Activated CD8-positive, alpha-beta T cell treated with anti-CD3 and anti-CD28 coated beads, Interleukin-2, amount 10 ng/mL, durations not matched to agents 7 days and 5 days (primary cell): ENCODE measurements at regions of chr11 and their contacts with region 1.

Region 1: DNA sequence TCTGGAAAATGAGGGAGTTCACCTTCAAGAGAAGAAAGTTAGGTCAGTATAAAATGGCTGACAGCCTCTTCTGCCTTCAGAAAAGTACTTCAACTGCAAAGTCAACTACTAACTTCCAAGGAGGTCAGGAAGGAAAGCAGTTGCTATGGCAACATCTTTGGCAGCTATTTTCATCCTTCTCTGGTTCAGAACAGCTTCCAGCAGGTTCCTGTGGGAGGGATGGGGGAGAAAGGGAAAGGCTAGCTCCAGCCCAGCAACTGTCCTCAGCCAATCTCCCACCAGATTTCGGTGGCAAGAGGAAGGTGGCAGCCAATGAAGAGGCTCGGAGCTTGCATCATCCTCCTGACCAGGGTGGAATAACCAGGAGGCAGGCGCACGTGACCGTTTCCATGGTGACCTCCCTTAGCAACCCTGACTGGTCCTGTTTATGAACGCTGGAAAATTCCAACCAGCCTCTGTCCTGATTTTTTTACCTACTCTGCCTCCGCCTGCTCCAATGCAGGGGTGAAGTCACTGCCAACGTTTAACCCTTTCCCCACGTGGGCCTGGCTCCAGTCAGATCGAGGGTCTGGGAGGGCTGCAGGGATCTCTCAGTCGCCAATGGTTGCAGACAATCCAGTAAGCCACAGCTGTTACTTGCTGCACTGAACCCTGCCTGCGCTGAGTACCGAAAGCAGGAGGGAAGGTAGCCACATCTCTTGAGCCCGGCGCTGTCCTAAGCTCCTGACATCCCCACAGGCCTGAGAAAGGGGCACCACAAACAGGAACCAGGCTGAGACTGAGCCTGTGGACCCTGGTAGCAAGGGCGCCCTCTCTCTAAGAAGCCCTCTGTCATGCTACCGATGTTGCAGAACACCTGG is 11.2 kb upstream of the MALAT1 start:
- DNase-seq: no peak
- ATAC-seq: peak; percentile 54
- H3K4me3 Mint-ChIP-seq: no peak overlapping the region
- H3K27ac Mint-ChIP-seq: no peak overlapping the region
- H3K4me1 Mint-ChIP-seq: peaks cover 31% of the 10 kb centered on the region
- H3K27me3 Mint-ChIP-seq: peaks cover 3% of the 10 kb centered on the region

Region 2: DNA sequence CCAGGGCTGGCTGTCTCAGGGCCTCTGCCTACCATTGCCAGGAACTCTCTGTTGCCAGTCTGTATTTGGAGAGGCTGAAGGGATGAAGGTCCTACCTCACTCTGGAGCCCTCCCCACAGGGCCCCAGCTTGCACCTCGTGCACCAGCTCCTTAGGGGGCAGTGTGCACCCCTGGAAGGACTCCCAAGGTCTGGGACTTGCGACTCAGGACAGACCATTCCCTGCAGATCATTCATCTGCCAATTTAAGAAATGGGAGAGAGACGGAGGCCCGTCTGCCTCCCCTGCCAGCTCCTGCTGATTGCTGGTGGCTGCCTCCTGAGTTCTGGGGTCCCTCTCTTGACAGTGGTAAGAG is 16.3 kb before region 1 on chr11:
- CTCF ChIA-PET with region 1: interaction called, 25 read pairs
- POLR2A ChIA-PET with region 1: interaction called, 794 read pairs
- DNase-seq: no peak
- ATAC-seq: no peak
- H3K4me3 Mint-ChIP-seq: peak overlapping the region; percentile 12
- H3K27ac Mint-ChIP-seq: peak overlapping the region; percentile 94
- H3K4me1 Mint-ChIP-seq: peaks cover 31% of the 10 kb centered on the region
- H3K27me3 Mint-ChIP-seq: no peaks in the 10 kb centered on the region

Region 3: DNA sequence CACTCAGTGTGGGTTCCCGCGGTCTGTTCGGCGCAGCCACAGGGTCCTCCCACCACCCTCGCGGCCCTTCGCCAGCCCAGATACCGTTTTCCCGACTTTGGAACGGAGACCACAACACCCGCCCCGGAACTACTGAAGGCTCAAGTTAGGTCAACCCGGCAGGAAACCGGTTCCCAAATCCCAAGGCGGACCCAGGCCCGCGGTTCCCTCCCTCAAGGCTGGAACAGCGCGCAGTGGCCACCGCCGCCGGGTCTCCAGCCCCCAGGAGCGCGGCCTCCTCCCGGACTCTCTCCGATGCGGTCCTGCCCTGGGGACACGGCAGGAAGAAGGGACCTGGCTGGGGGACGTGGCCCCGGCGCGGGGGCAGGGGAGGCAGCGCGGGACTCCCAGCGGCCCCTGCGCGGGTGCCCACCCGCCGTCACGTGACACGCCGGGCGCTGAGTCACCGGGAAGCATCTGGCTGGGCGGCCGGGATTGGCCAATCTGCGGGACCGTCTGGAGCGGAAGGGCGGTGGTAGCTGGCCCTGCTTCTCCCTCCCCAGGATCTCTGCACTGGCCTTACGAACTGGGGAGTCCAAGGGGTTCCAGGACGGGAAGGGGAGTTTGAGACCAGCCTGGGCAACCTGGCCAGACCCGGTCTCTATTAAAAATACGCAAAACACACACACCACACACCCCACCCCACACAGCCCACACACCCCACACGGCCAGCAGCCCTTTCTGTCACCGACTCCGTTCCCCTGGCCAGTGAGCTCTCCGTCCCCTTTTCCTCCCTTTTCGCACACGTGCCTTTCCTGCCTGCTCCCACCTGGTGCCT is 10.3 kb before region 1 on chr11:
- CTCF ChIA-PET with region 1: interaction called, 25 read pairs
- POLR2A ChIA-PET with region 1: interaction called, 794 read pairs
- DNase-seq: peak; percentile 90
- ATAC-seq: peak; percentile 84
- H3K4me3 Mint-ChIP-seq: peak overlapping the region; percentile 98
- H3K27ac Mint-ChIP-seq: peak overlapping the region; percentile 100
- H3K4me1 Mint-ChIP-seq: peaks cover 16% of the 10 kb centered on the region
- H3K27me3 Mint-ChIP-seq: peaks cover 4% of the 10 kb centered on the region